Activated CD4-positive, alpha-beta T cell treated with anti-CD3 and anti-CD28 coated beads, Interleukin-2, amount 10 ng/mL, durations not matched to agents 24 days and 14 days (primary cell): ENCODE measurements at regions of chr3 and their contacts with region 1.

Region 1: DNA sequence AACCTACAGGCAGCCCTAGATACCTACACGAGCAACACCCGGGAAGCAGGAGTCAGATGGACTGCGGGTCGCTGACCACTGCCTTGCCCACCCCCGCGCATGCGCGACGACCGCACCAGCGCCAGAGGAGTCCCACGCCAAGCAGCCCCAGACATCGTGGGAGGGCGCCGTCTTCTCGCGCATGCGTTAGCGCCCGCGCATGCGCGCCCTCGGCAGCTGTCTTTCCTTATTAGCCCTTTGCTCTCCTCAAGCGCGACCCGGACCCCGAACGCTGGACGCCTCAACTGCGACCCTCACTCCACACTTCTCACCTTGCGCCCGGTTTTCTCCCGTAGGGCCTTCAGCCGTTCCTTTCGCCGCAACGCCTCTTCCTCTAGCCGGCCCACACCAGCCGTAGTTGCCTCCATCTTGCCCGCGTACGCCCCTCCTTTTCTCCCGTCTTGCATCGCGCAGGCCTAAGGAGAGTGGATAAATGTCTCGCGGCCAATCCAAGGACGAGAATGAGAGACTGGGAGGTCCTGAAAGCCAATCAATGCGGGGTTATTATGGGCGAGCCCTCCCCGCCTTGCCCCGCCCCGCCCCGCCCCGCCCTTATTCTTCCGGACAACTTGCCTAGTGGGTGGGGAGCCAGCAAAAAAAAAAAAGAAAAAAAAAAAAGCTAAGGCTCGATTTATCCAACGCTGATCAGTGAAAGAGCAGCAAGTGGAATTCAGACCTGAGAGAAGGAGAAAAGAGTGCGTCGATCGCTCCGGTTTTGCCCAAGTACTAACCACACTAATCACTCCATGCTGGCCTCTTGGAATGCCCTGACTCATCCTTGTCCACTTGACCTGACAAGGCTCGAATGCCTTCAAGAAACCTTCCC is at the start of gene CCDC12:
- DNase-seq: peak; percentile 98
- H3K4me3 Mint-ChIP-seq: peak within 1 kb of the TSS; percentile 98
- H3K27ac Mint-ChIP-seq: peak within 1 kb of the TSS; percentile 99
- H3K4me1 Mint-ChIP-seq: peaks cover 55% of the 10 kb centered on the region
- H3K27me3 Mint-ChIP-seq: peaks cover 2% of the 10 kb centered on the region
- total RNA-seq, gene CCDC12: 55.3 and 66.2 TPM in 2 replicates

Region 2: DNA sequence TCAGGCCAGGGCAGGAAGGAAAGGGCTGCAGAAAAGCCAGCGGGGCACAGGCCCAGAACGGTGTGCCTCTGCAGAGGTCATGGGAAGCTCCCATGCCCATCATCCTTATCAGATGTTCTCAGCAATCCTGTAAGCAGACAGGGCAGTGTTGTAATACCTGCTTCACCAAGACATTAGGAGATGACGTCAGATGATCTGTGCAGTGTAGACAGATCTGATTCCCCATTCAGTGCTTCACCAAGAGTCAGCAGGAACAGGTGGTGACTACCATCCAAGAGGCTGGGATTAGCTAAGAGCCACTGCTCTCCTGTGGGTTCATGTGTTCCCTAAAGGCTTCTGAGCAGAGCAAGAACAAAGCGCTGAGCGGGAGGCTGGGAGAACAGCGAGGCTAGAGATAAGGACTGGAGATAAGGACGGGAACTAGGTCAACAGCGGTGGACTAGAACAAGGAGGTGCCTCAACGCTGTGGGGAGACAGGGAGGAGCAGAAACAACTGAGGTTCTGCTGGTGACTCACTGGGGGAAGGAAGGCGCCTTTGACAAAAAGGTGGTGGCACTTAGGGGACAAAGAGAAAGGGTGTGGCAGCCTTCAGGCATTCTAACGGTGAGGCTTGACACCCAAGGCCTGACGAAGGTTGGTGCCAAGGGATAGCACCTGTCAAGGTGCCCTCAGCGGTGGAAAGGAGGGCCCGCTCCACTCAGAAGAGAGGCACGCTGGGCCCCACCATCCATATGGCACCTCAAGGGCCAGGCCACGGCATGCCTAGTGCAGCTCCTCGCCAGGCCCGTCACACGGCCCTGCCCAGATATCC is 28.4 kb before region 1 on chr3:
- intact Hi-C with region 1: loop called (anchors 2 kb)
- DNase-seq: peak; percentile 87
- H3K4me3 Mint-ChIP-seq: peak overlapping the region; percentile 80
- H3K27ac Mint-ChIP-seq: peak overlapping the region; percentile 94
- H3K4me1 Mint-ChIP-seq: peaks cover 71% of the 10 kb centered on the region
- H3K27me3 Mint-ChIP-seq: no peaks in the 10 kb centered on the region

Region 3: DNA sequence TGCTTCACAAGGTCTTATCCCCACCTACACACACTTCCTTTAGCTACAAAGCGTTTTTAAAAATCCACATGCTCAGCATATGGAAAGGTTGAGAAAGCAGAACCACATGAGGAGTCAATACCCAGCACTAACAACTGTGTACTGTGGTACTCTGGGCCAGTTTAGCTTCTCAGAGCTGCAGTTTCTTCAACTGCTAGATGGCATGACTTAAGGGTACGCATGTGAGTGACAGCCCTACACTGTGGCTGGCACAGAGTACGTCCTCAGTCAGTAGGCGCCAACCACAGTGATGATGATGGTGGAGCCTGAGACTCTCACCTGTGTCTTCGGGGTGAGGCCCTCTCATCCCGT is 17.4 kb before region 1 on chr3:
- intact Hi-C with region 1: loop called (anchors 1 kb)
- DNase-seq: no peak
- H3K4me3 Mint-ChIP-seq: peak overlapping the region; percentile 32
- H3K27ac Mint-ChIP-seq: peak overlapping the region; percentile 83
- H3K4me1 Mint-ChIP-seq: peaks cover 71% of the 10 kb centered on the region
- H3K27me3 Mint-ChIP-seq: no peaks in the 10 kb centered on the region

Region 4: GRCh38 chr3:46987743-46988401 is 11.3 kb after region 1 on chr3:
- intact Hi-C with region 1: loop called (anchors 1 kb)
- DNase-seq: peak; percentile 97
- H3K4me3 Mint-ChIP-seq: peak overlapping the region; percentile 89
- H3K27ac Mint-ChIP-seq: peak overlapping the region; percentile 97
- H3K4me1 Mint-ChIP-seq: peaks cover 62% of the 10 kb centered on the region
- H3K27me3 Mint-ChIP-seq: no peaks in the 10 kb centered on the region

Region 5: GRCh38 chr3:47016934-47017435 is 40.4 kb after region 1 on chr3:
- intact Hi-C with region 1: loop called (anchors 5 kb)
- DNase-seq: peak; percentile 79
- H3K4me3 Mint-ChIP-seq: peak overlapping the region; percentile 50
- H3K27ac Mint-ChIP-seq: peak overlapping the region; percentile 86
- H3K4me1 Mint-ChIP-seq: peaks cover 39% of the 10 kb centered on the region
- H3K27me3 Mint-ChIP-seq: no peaks in the 10 kb centered on the region

Region 6: GRCh38 chr3:47164007-47164881 is 187.7 kb after region 1 on chr3 and contains the start of gene SETD2:
- intact Hi-C with region 1: loop called (anchors 5 kb)
- DNase-seq: peak; percentile 94
- H3K4me3 Mint-ChIP-seq: peak within 1 kb of the TSS; percentile 94
- H3K27ac Mint-ChIP-seq: peak within 1 kb of the TSS; percentile 98
- H3K4me1 Mint-ChIP-seq: peaks cover 46% of the 10 kb centered on the region
- H3K27me3 Mint-ChIP-seq: no peaks in the 10 kb centered on the region
- total RNA-seq, gene SETD2: 41.5 and 42.0 TPM in 2 replicates

Region 7: GRCh38 chr3:47282424-47283192 is 306.1 kb after region 1 on chr3 and contains the starts of genes KIF9 and KLHL18:
- intact Hi-C with region 1: loop called (anchors 2 kb)
- DNase-seq: peak; percentile 98
- H3K4me3 Mint-ChIP-seq: peak within 1 kb of the TSS; percentile 100
- H3K27ac Mint-ChIP-seq: peak within 1 kb of the TSS; percentile 100
- H3K4me1 Mint-ChIP-seq: peaks cover 29% of the 10 kb centered on the region
- H3K27me3 Mint-ChIP-seq: peaks cover 3% of the 10 kb centered on the region
- total RNA-seq, gene KIF9: 3.0 and 3.6 TPM in 2 replicates
- total RNA-seq, gene KLHL18: 47.0 and 49.3 TPM in 2 replicates